ENCODE measurements at regions of chr17 and their contacts with region 1.

Region 1: GRCh38 chr17:7329374-7329996 is 350 bp upstream of the NEURL4 start:
- DNase-seq: peak; percentile 99 to 100
- ATAC-seq: peak; percentile 62 to 82
- H3K4me3 ChIP-seq: peak overlapping the region; percentile 81
- H3K27ac ChIP-seq: peak overlapping the region; percentile 89 to 98
- H3K4me1 ChIP-seq: peaks cover 15% of the 10 kb centered on the region; the same call in 2 of the 3 replicates
- CTCF ChIP-seq: no peak
- EP300 ChIP-seq: no peak
- POLR2A ChIP-seq: peak; percentile 87
- RAD21 ChIP-seq: no peak

Region 2: GRCh38 chr17:7314719-7315569 is 14.5 kb before region 1 on chr17 and contains the start of gene GPS2:
- CTCF ChIA-PET with region 1: interaction called, 433 read pairs
- POLR2A ChIA-PET with region 1: interaction called, 22 read pairs
- DNase-seq: peak; percentile 93 to 95
- ATAC-seq: peak; percentile 77 to 82
- H3K4me3 ChIP-seq: peak within 1 kb of the TSS; percentile 75
- H3K27ac ChIP-seq: peak within 1 kb of the TSS; percentile 88 to 95
- H3K4me1 ChIP-seq: peaks cover 47% of the 10 kb centered on the region
- CTCF ChIP-seq: no peak
- EP300 ChIP-seq: peak in 1 of 2 experiments; percentile 6; a peak in 1 of 5 replicates
- POLR2A ChIP-seq: peak; percentile 82
- RAD21 ChIP-seq: no peak; a peak in 2 of 5 replicates
- polyA plus RNA-seq, gene GPS2: 48.5 and 61.7 TPM in 2 replicates

Region 3: DNA sequence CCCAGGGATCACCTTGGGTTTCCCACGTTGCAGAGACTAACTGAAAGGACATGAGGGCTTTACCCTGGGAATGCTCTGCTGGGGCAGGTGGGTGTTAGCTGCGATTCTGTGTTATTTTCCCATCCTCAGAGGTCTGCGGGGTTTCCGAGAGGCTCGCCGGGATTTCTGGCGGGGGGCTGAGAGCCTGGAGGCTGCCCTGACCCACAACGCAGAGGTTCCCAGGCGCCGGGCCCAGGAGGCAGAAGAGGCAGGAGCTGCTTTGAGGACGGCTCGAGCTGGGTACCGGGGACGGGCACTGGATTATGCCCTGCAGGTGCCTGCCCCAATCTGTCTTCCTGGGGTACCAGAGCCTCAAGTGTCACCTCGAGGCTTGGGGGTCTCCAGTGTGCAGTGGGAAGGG is 13.8 kb after region 1 on chr17:
- CTCF ChIA-PET with region 1: interaction called, 433 read pairs
- POLR2A ChIA-PET with region 1: interaction called, 22 read pairs
- DNase-seq: no peak
- ATAC-seq: no peak
- H3K4me3 ChIP-seq: no peak overlapping the region
- H3K27ac ChIP-seq: no peak overlapping the region
- H3K4me1 ChIP-seq: peaks cover 8% of the 10 kb centered on the region; the same call in 1 of the 3 replicates
- CTCF ChIP-seq: no peak
- EP300 ChIP-seq: no peak
- POLR2A ChIP-seq: no peak
- RAD21 ChIP-seq: no peak